Cardiac septum (tissue), 1 donor: ENCODE measurements at regions of chr19 and their contacts with region 1.

Region 1: GRCh38 chr19:55339048-55339888 is at the start of gene KMT5C:
- DNase-seq: peak; percentile 100
- total RNA-seq, gene KMT5C: 6.1 TPM

Region 2: GRCh38 chr19:55385740-55386529 is 46.7 kb after region 1 on chr19 and contains the start of gene RPL28:
- intact Hi-C with region 1: loop called (anchors 1 kb)
- DNase-seq: peak; percentile 99
- total RNA-seq, gene RPL28: 479 TPM